Activated CD4-positive, alpha-beta memory T cell treated with anti-CD3 and anti-CD28 coated beads for 36 hours (primary cell): ENCODE measurements at regions of chr3 and their contacts with region 1.

Region 1: DNA sequence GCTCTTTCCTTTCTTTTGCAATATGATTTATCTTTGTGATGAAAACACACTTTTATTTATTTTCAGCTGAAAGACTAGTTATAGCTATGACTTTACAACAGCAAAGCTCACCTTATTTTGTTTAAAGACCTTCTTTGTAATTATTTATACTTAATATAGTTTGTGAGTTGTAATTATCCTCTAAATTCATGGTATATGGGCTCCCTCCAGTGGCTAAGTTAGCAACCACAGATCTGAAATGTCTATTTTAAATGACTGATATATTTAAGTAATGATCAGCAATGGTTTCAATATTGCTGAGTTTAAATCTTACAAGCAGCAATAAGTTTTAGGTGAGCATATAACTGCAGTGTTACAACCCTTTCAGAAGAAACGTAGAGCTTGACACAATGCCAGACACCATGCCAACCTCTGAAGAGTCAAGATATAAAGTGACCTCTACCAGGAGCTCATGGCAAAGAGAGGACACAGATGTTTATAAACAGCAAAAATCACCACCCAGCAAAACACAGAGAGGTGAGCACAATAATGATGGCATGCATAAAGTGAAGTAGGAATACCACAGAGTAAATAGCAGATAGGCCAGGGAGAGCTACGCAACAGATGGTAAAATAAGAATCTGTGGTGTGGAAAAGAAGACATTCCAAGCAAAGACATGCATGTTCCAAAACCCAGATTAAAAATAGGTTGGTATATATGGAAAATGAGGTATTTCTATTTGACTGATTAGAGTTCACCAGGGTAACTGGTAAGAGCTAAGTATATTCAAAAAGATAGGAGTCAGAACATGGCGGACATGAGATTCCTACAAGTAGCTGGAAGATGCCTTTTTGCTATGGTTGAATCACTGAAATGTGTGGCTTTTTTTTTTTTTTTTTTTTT is 143.7 kb upstream of the ZNF385D start:
- DNase-seq: no peak
- H3K4me3 Mint-ChIP-seq: no peak overlapping the region
- H3K27ac Mint-ChIP-seq: no peak overlapping the region
- H3K4me1 Mint-ChIP-seq: no peaks in the 10 kb centered on the region
- H3K27me3 Mint-ChIP-seq: no peaks in the 10 kb centered on the region

Region 2: GRCh38 chr3:20340324-20340928 is 1554.3 kb before region 1 on chr3:
- CTCF ChIA-PET with region 1: no interaction called
- POLR2A ChIA-PET with region 1: no interaction called
- intact Hi-C with region 1: loop called (anchors 5 kb)
- DNase-seq: peak; percentile 75
- H3K4me3 Mint-ChIP-seq: no peak overlapping the region
- H3K27ac Mint-ChIP-seq: no peak overlapping the region
- H3K4me1 Mint-ChIP-seq: no peaks in the 10 kb centered on the region
- H3K27me3 Mint-ChIP-seq: no peaks in the 10 kb centered on the region